ENCODE measurements at regions of chr15 and their contacts with region 1.

Region 1: DNA sequence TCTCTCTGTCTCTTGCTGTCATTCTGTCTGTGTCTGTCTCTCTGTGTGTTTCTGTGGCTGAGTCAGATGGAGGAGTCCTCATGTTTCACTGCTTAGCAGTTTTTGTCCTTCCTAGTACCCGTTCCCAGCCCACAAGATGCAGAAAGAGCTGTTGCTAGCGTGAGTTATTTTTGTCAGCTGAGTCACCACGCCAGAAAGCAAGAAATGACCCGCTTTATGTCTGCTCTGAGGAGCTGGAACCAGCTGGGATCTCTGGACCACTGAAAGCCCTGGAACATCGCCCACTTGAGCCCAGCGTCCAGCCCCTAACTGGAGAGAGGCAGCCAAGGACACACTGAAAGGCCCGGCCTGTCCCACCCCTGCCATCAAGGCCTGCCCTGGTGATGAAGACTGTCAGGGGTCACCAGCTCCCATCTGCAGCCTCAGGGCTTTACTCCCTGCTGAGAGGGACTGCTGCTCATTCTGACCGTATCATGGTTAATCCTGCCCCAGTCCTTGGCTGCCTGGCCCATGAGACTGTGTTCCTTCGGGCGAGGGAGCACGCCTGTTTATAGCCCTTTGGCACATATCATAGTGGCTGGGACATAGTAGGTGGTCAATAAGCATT is 101.7 kb upstream of the TPM1 start:
- DNase-seq: peak; percentile 82 to 92 (median 89)
- ATAC-seq: peak; percentile 88 to 94 (median 94)
- H3K4me3 ChIP-seq: peak overlapping the region in 1 of 12 donors; percentile 3
- H3K27ac ChIP-seq: peak overlapping the region; percentile 72 to 90 (median 85)
- H3K4me1 ChIP-seq: peaks cover 0 to 33% (median 25%) of the 10 kb centered on the region in 12 donors
- H3K27me3 ChIP-seq: no peaks in the 10 kb centered on the region
- CTCF ChIP-seq: no peak
- POLR2A ChIP-seq: no peak

Region 2: DNA sequence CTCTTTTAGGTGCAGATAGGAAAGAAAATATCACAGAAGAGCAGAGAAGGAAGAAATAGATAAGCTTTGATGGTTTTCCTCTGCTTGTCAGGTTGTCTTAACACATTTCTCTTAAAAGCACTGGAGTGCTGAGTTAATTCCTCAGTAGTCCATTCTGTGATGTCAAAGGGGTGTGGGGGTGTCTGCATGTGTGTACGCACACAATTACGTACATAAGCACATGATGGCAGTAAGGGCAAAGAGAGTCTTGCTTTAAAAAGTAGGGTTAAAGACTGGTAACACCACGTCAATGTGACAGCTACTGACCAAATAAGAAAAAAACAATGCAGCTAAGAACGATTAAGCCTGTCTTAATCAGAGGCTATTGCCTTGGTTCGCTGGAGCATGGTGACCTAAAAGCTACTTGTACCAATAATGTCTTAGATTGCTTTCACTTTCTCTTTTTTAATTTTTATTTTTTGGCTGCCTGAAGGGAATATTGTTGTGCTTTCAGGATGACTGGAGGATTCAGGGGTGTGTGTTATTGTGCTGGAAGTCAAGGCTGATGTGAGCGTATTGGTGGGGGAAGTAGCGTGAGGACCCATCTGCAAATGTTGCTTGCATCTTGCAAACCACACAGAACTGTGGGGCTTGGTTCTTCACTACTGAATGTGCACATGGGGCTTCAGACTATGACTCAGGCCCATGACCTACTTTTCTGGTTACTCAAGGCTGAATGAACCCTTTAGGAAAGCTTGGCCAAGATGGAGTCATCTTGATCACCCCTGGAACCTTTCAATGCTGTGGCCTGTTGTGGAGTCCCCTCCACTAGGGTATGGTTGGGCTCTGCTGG is 316.1 kb before region 1 on chr15:
- intact Hi-C with region 1: no loop called
- DNase-seq: peak in 1 of 5 donors; percentile 20
- ATAC-seq: peak; percentile 55 to 95 (median 76)
- H3K4me3 ChIP-seq: peak overlapping the region in 9 of 12 donors; percentile 2 to 42 (median 22)
- H3K27ac ChIP-seq: peak overlapping the region in 10 of 12 donors; percentile 3 to 50 (median 26)
- H3K4me1 ChIP-seq: peaks cover 0 to 22% (median 11%) of the 10 kb centered on the region in 12 donors
- H3K27me3 ChIP-seq: no peaks in the 10 kb centered on the region
- CTCF ChIP-seq: no peak
- POLR2A ChIP-seq: no peak

Region 3: GRCh38 chr15:63013052-63013808 is 72.4 kb after region 1 on chr15:
- intact Hi-C with region 1: no loop called
- DNase-seq: no peak
- ATAC-seq: peak in 2 of 4 donors; percentile 33 to 65
- H3K4me3 ChIP-seq: no peak overlapping the region
- H3K27ac ChIP-seq: peak overlapping the region in 5 of 12 donors; percentile 9 to 35 (median 29)
- H3K4me1 ChIP-seq: peaks cover 0 to 35% (median 12%) of the 10 kb centered on the region in 12 donors
- H3K27me3 ChIP-seq: no peaks in the 10 kb centered on the region
- CTCF ChIP-seq: no peak
- POLR2A ChIP-seq: no peak

Region 4: GRCh38 chr15:63030101-63030551 is 89.3 kb after region 1 on chr15:
- intact Hi-C with region 1: loop called in 1 of 10 experiments (anchors 10 kb)
- DNase-seq: peak in 2 of 5 donors; percentile 50 to 52
- ATAC-seq: peak; percentile 58 to 81 (median 76)
- H3K4me3 ChIP-seq: no peak overlapping the region
- H3K27ac ChIP-seq: peak overlapping the region in 1 of 12 donors; percentile 46
- H3K4me1 ChIP-seq: peaks cover 0 to 7% (median 0%) of the 10 kb centered on the region in 12 donors
- H3K27me3 ChIP-seq: no peaks in the 10 kb centered on the region
- CTCF ChIP-seq: no peak
- POLR2A ChIP-seq: no peak